ENCODE measurements at regions of chr20 and their contacts with region 1.

Region 1: DNA sequence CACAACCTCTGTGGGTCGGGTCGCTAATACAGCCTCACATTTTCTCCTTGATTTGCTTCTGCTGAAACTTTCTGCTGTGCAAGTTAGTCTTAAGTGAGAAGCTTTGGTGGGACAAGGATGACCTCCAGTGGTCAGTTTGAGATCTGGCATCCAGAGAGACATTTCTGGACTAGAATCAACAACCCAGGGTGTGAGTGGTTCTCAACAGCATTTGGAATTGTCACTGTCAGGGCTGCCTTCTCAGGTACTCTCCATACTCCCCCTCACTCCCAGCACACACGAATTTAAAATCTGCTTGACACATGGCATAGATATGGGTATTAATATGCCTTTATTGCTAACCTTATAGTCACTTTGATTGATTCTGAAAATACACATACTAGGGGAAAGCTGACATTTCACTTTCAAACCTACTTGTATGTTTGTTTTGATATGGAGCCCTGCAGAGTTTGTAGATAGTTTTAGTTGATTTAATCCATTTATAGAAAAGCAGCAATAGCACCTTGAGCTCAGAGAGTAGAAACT is 13.2 kb downstream of the OTOR start:
- DNase-seq: no peak
- ATAC-seq: peak; percentile 75 to 80
- H3K4me3 ChIP-seq: no peak overlapping the region
- H3K27ac ChIP-seq: no peak overlapping the region
- H3K4me1 ChIP-seq: no peaks in the 10 kb centered on the region
- H3K27me3 ChIP-seq: no peaks in the 10 kb centered on the region

Region 2: DNA sequence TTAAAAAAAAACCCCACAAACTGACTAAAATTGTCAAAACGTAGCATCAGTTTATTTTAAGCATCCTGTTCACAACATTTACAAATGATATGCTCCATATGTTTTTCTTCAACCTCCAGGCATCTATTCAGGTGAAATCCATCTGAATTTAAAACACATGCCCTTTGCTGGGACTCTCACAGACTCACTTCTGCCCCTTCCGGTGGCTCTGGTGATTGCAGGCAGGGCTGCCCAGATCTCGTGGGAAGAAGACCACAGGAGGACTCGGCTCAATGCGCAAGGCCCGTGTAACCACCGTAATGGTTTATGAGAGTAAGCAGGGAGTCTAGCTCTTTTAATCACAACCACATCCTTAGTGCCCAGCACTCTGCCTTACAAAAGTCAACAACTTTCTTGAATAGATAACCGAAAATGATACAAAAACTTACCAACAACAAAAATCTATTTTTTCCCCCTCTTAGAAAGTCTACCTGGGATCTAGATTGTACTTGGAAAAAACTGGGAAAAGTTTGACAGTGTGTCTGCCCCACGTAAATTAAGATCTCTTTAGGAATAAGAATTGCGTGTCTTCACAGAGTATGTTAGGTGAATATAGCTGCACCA is 327.2 kb before region 1 on chr20:
- intact Hi-C with region 1: no loop called
- DNase-seq: peak; percentile 48 to 80 (median 69)
- ATAC-seq: peak in 1 of 2 donors; percentile 37
- H3K4me3 ChIP-seq: no peak overlapping the region
- H3K27ac ChIP-seq: no peak overlapping the region
- H3K4me1 ChIP-seq: no peaks in the 10 kb centered on the region
- H3K27me3 ChIP-seq: no peaks in the 10 kb centered on the region

Region 3: GRCh38 chr20:16517946-16518783 is 243.2 kb before region 1 on chr20:
- intact Hi-C with region 1: loop called in 1 of 4 experiments (anchors 10 kb)
- DNase-seq: peak in 1 of 3 donors; percentile 37
- ATAC-seq: peak; percentile 52 to 75
- H3K4me3 ChIP-seq: no peak overlapping the region
- H3K27ac ChIP-seq: no peak overlapping the region
- H3K4me1 ChIP-seq: no peaks in the 10 kb centered on the region
- H3K27me3 ChIP-seq: no peaks in the 10 kb centered on the region

Region 4: GRCh38 chr20:16701296-16701695 is 60.1 kb before region 1 on chr20:
- intact Hi-C with region 1: loop called in 1 of 4 experiments (anchors 5 kb)
- DNase-seq: no peak
- ATAC-seq: no peak
- H3K4me3 ChIP-seq: no peak overlapping the region
- H3K27ac ChIP-seq: no peak overlapping the region
- H3K4me1 ChIP-seq: no peaks in the 10 kb centered on the region
- H3K27me3 ChIP-seq: no peaks in the 10 kb centered on the region